Dendritic cell treated with granulocyte-macrophage colony-stimulating factor and Interleukin-4, amounts not matched to agents 40 ng/mL and 50 ng/mL, for 4 days (primary cell): ENCODE measurements at regions of chr5 and their contacts with region 1.

Region 1: GRCh38 chr5:147369742-147370374 is 135.0 kb downstream of the STK32A start:
- H3K4me3 Mint-ChIP-seq: no peak overlapping the region
- H3K27ac Mint-ChIP-seq: no peak overlapping the region
- H3K4me1 Mint-ChIP-seq: no peaks in the 10 kb centered on the region
- H3K27me3 Mint-ChIP-seq: peaks cover 1% of the 10 kb centered on the region

Region 2: GRCh38 chr5:147098233-147098790 is 271.5 kb before region 1 on chr5:
- intact Hi-C with region 1: loop called (anchors 2 kb)
- H3K4me3 Mint-ChIP-seq: no peak overlapping the region
- H3K27ac Mint-ChIP-seq: no peak overlapping the region
- H3K4me1 Mint-ChIP-seq: no peaks in the 10 kb centered on the region
- H3K27me3 Mint-ChIP-seq: no peaks in the 10 kb centered on the region

Region 3: DNA sequence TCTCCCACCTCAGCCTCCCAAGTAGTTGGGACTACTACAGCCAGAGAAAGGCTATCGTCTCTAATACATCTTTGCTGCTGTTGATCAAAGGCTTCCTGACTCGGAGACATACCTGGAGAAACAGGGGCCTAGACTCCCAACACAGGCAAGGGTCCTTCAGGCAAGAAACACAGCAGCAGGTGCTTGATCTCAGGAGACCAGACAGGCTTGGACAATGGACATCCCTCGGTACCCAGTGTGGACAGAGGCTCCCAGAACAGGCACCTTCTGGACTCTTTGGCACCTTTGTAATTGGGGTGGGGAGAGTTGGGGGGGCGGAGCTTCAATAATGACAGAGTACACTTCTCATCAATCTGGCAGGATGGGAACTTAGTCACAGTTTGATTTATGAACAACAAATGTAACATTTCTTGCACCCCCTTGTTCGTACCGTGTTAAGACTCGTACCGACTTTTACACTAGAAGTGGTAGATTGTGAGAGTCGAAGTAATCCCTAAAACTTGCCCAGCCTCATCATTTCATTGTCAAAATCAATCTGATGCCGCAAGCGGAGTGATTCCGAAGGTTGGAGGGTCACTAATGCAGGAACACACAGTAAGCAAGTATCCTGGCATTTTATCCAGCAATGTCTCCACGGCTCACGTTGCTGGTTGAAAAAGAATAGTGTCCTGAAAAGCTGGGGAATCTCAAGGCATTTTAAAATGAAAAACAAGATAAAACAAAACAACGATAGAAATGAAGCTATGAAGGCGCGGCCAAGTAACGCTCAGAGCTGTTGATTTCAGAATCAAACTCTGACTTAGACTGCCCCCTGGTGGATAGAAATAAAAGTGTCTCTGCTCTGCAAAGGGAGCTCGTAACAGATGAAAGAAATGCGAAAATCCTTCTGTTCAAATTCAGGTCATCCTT is 181.4 kb before region 1 on chr5:
- intact Hi-C with region 1: loop called (anchors 10 kb)
- H3K4me3 Mint-ChIP-seq: no peak overlapping the region
- H3K27ac Mint-ChIP-seq: no peak overlapping the region
- H3K4me1 Mint-ChIP-seq: peaks cover 5% of the 10 kb centered on the region
- H3K27me3 Mint-ChIP-seq: peaks cover 6% of the 10 kb centered on the region

Region 4: GRCh38 chr5:147276497-147276896 is 93.4 kb before region 1 on chr5:
- intact Hi-C with region 1: no loop called
- H3K4me3 Mint-ChIP-seq: no peak overlapping the region
- H3K27ac Mint-ChIP-seq: no peak overlapping the region
- H3K4me1 Mint-ChIP-seq: no peaks in the 10 kb centered on the region
- H3K27me3 Mint-ChIP-seq: peaks cover 3% of the 10 kb centered on the region